SK-N-SH (cell line): ENCODE measurements at regions of chr12 and their contacts with region 1.

Region 1: DNA sequence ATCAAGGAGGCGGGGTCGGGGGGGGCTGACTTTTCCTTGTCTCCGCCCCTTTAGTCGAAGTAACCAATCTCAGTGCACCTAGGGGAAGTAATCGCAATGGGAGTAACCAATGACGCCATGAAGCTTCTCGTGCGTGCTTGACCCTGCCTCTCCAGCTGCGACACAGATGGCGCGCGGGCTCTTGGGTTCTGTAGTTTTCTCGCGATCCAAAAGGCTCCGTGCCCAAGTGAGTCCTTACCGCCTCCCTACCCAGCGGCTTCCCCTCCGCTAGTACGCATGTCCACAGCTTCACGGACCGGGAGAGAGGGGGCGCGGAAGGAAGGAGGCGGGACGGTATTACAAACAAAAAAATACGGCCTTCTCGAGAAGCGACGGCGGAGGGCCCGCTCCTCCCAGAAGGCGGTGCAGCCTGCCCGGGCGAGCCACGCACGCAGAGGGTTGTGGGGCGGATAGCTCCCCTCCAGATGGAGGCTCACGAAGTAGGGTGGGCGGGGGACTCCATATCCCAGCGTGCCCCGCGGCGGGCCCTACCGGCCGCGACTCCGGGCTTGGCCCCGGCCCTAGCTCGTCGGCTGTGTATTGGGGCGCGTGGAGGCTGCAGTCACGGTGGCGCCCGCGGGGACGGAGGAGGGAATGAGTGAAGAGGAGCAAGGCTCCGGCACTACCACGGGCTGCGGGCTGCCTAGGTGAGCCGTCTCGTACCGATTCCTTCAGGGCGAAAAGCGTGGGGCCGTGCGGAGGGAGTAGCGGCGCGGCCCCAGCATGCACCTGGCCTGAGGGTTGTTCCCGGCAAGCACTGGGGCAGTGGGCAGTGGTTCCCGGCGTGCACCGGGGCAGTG is at the start of gene TARBP2:
- DNase-seq: peak; percentile 92
- H3K4me3 ChIP-seq: peak within 1 kb of the TSS; percentile 52 to 75
- H3K27ac ChIP-seq: peak within 1 kb of the TSS; percentile 94 to 100
- H3K4me1 ChIP-seq: peaks cover 33 to 37% of the 10 kb centered on the region in 2 experiments
- H3K27me3 ChIP-seq: no peaks in the 10 kb centered on the region
- CTCF ChIP-seq: no peak
- EP300 ChIP-seq: no peak
- RAD21 ChIP-seq: no peak
- polyA plus RNA-seq, gene TARBP2: 57.8 and 69.8 TPM in 2 replicates

Region 2: DNA sequence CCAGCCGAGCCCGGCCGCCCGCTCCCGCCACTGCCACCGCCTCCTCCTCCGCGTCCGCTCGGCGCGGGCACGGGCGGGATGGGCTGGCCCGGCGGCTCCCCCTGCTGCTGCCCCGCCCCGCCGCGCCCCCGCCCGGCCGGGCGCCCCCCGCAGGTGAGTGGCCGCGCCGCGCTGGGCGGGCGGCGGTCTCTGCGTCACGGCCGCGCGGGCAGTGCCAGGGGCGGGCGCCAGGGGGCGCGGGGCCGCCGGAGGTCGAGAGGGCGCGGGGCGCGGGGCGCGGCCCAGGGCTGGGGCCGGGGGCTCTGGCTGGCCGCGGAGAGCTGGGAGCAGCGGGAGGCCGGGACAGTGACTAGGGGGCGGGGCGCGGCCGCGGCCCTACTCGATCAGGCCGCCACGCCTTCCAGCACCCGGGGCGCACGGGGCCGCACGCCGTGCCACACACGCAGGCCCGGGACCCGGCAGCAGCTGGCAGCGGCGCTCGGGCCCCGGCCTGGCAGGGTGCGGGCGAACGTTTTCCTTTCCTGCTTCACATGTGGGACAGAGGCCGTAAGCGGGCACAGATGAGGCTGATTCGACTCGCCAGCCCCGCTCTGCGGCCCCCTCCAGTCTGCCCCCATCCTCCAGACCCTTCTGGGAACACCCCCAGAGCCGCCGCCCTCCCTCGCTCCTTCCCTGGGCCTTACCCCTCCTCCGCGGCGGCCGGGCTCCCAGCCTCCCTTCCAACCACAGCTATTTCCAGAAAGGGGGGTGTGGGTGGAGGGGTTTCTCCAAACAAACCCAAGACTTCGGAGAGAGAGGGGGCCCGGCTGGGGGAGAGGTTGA is 453.6 kb before region 1 on chr12:
- CTCF ChIA-PET with region 1: no interaction called
- POLR2A ChIA-PET with region 1: no interaction called
- DNase-seq: peak; percentile 95
- H3K4me3 ChIP-seq: peak overlapping the region; percentile 73 to 75
- H3K27ac ChIP-seq: peak overlapping the region; percentile 95 to 98
- H3K4me1 ChIP-seq: peaks cover 29 to 63% of the 10 kb centered on the region in 2 experiments
- H3K27me3 ChIP-seq: no peaks in the 10 kb centered on the region
- CTCF ChIP-seq: no peak
- EP300 ChIP-seq: peak in 1 of 2 experiments; percentile 53; a peak in 1 of 4 replicates
- RAD21 ChIP-seq: no peak

Region 3: GRCh38 chr12:53441040-53441833 is 59.8 kb before region 1 on chr12 and contains the start of gene PRR13:
- CTCF ChIA-PET with region 1: no interaction called
- POLR2A ChIA-PET with region 1: interaction called, 13 read pairs
- DNase-seq: peak; percentile 93
- H3K4me3 ChIP-seq: peak within 1 kb of the TSS; percentile 65 to 72
- H3K27ac ChIP-seq: peak within 1 kb of the TSS; percentile 89 to 92
- H3K4me1 ChIP-seq: peaks cover 0 to 7% of the 10 kb centered on the region in 2 experiments; a peak in 1 of 4 replicates
- H3K27me3 ChIP-seq: no peaks in the 10 kb centered on the region
- CTCF ChIP-seq: no peak
- EP300 ChIP-seq: no peak
- RAD21 ChIP-seq: no peak
- polyA plus RNA-seq, gene PRR13: 58.5 and 59.3 TPM in 2 replicates

Region 4: GRCh38 chr12:53652366-53652765 is 151.4 kb after region 1 on chr12:
- CTCF ChIA-PET with region 1: no interaction called
- POLR2A ChIA-PET with region 1: no interaction called
- DNase-seq: no peak
- H3K4me3 ChIP-seq: no peak overlapping the region
- H3K27ac ChIP-seq: no peak overlapping the region
- H3K4me1 ChIP-seq: 0 out of 4 replicates have a peak, but pooled peaks cover 0 to 8% of the 10 kb centered on the region in 2 experiments
- H3K27me3 ChIP-seq: no peaks in the 10 kb centered on the region
- CTCF ChIP-seq: no peak
- EP300 ChIP-seq: no peak
- RAD21 ChIP-seq: no peak